ENCODE measurements at regions of chr16 and their contacts with region 1.

Region 1: DNA sequence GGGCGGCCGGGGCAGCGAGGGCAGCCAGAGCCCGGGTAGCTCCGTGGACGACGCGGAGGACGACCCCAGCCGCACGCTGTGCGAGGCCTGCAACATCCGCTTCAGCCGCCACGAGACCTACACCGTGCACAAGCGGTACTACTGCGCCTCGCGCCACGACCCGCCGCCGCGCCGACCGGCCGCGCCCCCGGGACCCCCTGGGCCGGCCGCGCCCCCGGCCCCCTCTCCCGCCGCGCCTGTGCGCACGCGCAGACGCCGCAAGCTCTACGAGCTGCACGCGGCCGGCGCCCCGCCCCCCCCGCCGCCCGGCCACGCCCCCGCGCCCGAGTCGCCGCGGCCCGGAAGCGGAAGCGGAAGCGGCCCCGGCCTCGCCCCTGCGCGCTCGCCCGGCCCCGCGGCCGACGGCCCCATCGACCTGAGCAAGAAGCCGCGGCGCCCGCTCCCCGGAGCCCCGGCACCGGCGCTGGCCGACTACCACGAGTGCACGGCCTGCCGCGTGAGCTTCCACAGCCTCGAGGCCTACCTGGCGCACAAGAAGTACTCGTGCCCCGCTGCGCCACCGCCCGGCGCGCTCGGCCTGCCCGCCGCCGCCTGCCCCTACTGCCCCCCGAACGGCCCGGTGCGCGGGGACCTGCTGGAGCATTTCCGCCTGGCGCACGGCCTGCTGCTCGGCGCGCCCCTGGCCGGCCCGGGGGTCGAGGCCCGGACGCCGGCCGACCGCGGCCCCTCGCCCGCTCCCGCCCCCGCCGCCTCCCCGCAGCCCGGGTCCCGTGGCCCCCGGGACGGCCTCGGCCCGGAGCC is 36.1 kb upstream of the ZC3H18 start:
- DNase-seq: peak; percentile 77 to 91 (median 84)
- ATAC-seq: peak in 3 of 4 donors; percentile 22 to 65 (median 36)
- H3K4me3 ChIP-seq: peak overlapping the region; percentile 50 to 94 (median 70)
- H3K27ac ChIP-seq: peak overlapping the region; percentile 79 to 93 (median 86)
- H3K4me1 ChIP-seq: peaks cover 0 to 21% (median 9%) of the 10 kb centered on the region in 12 donors
- H3K27me3 ChIP-seq: peaks cover 0 to 8% (median 3%) of the 10 kb centered on the region in 9 donors
- CTCF ChIP-seq: peak in 1 of 12 donors; percentile 8
- POLR2A ChIP-seq: peak in 1 of 2 donors; percentile 71

Region 2: DNA sequence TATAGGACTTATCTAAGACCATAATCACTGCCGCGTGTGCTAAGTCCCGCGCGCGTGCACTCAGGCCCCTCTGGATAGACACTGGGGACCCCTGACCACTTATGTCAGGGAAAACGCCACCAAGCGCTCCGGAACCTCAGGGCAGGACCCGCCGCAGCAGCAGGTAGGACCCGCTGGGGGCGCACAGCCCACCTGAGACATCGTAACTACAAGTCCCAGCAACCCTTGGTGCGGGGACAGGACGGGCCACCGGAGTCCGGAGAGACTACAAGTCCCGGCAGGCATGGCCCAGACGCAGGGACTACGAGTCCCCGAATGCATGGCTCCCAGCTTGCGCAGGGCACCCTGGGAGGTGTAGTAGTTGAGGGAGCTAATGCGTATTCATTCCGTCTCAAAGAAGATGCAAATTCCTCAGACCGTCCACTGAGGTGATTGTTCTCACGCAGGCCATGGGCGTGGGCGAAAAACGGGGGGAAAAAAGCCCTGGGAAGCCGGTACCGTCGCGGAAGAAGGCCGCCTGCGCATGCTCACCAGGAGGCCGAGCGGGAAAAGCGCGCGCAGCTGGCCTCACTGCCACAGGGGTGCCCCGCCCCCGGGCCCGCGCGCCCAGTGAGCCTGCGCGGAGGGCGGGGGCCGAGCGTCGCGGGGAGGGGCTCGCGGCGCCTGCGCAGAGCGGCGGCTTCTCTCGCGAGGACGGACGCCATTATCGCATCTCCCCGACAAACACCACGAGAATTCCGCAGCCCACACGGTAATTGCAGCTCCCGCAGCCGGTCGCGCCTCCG is 583.2 kb before region 1 on chr16 and contains the start of gene BANP:
- intact Hi-C with region 1: loop called in 1 of 10 experiments (anchors 10 kb)
- DNase-seq: peak; percentile 98 to 100 (median 98)
- ATAC-seq: peak; percentile 96 to 98 (median 97)
- H3K4me3 ChIP-seq: peak within 1 kb of the TSS; percentile 76 to 99 (median 95)
- H3K27ac ChIP-seq: peak within 1 kb of the TSS; percentile 92 to 99 (median 96)
- H3K4me1 ChIP-seq: peaks cover 0 to 62% (median 25%) of the 10 kb centered on the region in 12 donors
- H3K27me3 ChIP-seq: no peaks in the 10 kb centered on the region
- CTCF ChIP-seq: peak in 11 of 12 donors; percentile 22 to 60 (median 49)
- POLR2A ChIP-seq: peak in 1 of 2 donors; percentile 73
- total RNA-seq, gene BANP: 11.9 to 20.7 (median 14.3) TPM

Region 3: DNA sequence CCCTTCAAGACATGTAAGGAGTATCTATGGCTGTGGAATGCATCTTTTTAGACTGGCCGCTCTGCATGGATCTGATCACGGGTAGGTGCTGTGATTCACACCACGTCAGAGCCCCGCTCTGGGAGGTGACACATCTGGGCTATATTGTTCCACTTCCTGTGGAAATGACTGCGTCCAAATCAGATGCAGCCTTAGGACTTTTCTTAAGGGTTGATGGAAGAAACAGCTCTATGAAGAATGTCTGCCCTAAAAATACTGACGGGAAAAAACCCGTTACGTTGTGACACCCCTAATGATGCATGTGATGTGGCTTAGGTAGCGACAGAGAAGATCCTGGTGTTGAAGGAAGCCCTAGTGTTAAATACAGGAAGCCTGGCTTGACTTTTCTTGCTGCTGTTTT is 570.7 kb before region 1 on chr16:
- intact Hi-C with region 1: loop called in 2 of 10 experiments (anchors 10 kb)
- DNase-seq: peak in 3 of 5 donors; percentile 48 to 65 (median 54)
- ATAC-seq: peak; percentile 41 to 87 (median 54)
- H3K4me3 ChIP-seq: no peak overlapping the region
- H3K27ac ChIP-seq: peak overlapping the region; percentile 47 to 84 (median 75)
- H3K4me1 ChIP-seq: peaks cover 6 to 61% (median 37%) of the 10 kb centered on the region in 12 donors
- H3K27me3 ChIP-seq: no peaks in the 10 kb centered on the region
- CTCF ChIP-seq: no peak
- POLR2A ChIP-seq: no peak

Region 4: GRCh38 chr16:88523309-88524161 is 10.6 kb before region 1 on chr16:
- intact Hi-C with region 1: no loop called
- DNase-seq: peak in 1 of 5 donors; percentile 62
- ATAC-seq: no peak
- H3K4me3 ChIP-seq: no peak overlapping the region
- H3K27ac ChIP-seq: no peak overlapping the region
- H3K4me1 ChIP-seq: peaks cover 0 to 28% (median 12%) of the 10 kb centered on the region in 12 donors
- H3K27me3 ChIP-seq: no peaks in the 10 kb centered on the region
- CTCF ChIP-seq: no peak
- POLR2A ChIP-seq: no peak

Region 5: DNA sequence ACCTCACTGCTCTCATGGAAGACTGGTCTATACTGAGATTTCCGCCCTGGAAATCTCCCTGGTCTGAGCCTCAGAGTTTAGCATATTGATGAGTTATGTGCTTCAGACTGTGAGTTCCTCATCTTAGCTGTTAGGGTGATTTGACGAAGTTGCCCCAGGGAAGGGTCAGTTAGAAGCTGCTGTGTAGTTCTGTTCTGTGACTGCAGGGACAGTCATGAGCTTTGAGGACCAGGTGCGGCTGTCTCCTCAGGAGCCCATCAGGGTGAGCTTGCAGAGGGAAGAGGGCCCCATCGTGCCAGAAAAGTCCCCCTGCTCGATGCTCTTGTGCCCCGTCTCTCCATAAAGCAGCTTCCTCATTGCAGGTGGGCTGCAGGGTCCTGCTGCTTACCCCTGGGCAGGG is 75.9 kb after region 1 on chr16:
- intact Hi-C with region 1: no loop called
- DNase-seq: no peak
- ATAC-seq: no peak
- H3K4me3 ChIP-seq: no peak overlapping the region
- H3K27ac ChIP-seq: no peak overlapping the region
- H3K4me1 ChIP-seq: peaks cover 0 to 10% (median 0%) of the 10 kb centered on the region in 12 donors
- H3K27me3 ChIP-seq: no peaks in the 10 kb centered on the region
- CTCF ChIP-seq: no peak
- POLR2A ChIP-seq: no peak

Measured in heart left ventricle (tissue), 16 donors.